CD14-positive monocyte (primary cell): ENCODE measurements at regions of chr20 and their contacts with region 1.

Region 1: DNA sequence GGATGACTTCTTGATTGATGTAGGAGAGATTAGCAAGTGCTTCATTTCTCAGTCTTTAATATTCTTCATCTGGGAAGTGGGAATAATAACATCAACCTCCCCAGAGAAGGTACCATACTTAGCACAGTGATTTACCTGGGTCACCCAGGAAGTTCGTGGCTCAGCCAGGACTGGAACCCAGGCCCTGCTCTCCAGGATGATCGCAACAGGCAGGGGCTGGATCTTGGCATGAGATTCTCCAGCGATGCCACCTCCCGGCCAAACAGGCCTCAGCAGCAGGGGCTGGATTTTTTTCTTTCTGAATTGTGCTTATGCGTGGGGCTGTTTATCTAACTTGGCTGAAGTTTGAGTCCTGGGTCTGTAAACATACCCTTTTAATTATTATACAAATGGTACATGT is 129.5 kb upstream of the PTPN1 start:
- DNase-seq: no peak
- H3K4me3 ChIP-seq: no peak overlapping the region
- H3K4me3 Mint-ChIP-seq: no peak overlapping the region
- H3K27ac ChIP-seq: no peak overlapping the region
- H3K27ac Mint-ChIP-seq: peak overlapping the region in 3 of 7 donors; percentile 38 to 87 (median 65)
- H3K4me1 ChIP-seq: peaks cover 57 to 69% of the 10 kb centered on the region in 2 donors
- H3K4me1 Mint-ChIP-seq: peaks cover 75% of the 10 kb centered on the region
- H3K27me3 ChIP-seq: no peaks in the 10 kb centered on the region
- H3K27me3 Mint-ChIP-seq: peaks cover 1 to 7% (median 5%) of the 10 kb centered on the region in 3 donors
- CTCF ChIP-seq: no peak

Region 2: DNA sequence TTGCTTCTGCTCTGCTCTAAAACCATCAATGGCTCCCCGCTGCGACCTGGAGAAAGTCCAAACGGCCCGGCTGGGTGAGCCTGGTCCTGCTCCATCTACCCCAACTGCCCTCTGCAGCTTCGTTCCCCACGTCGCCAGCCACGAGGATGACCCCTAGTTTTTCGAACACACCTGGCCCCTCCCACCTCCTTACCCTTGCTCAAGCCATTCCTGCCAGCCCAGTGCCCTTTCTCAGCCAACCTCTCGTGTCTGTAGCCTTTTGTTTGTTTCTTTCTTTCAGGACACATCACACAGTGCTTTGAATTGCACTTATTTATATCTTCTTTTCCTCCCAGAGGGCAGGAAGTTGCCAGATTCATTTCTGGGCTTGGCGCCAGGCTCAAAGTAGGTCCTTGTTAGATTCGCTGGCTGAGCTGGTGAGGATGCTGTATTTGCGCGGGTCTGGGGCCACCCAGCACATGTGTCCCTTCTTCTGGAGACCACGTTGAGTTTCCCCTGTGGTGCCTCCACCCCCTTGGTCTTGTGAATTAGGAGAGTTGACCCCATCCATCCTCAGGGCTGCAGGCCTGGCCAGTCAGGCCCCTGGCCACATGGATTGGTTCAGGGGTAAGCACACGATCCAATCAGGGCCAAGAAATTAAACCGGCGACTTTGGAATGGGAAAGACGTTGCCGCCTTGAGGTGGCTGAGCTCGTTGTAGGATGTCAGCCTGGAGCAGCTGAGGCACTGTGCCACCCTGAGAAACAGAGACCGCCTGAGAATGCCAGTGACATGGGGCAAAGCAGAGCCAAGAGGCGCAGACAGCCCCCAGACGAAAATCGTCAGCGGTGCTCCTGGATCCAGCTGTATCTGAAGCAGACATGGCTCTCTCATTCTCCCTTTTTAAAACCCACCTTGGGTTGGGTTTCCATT is 34.0 kb before region 1 on chr20:
- intact Hi-C with region 1: loop called in 1 of 2 experiments (anchors 2 kb)
- DNase-seq: peak; percentile 47 to 58 (median 51)
- H3K4me3 ChIP-seq: peak overlapping the region in 1 of 3 experiments; percentile 51
- H3K4me3 Mint-ChIP-seq: peak overlapping the region; percentile 67 to 84
- H3K27ac ChIP-seq: peak overlapping the region; percentile 84 to 94
- H3K27ac Mint-ChIP-seq: peak overlapping the region; percentile 97 to 99 (median 98)
- H3K4me1 ChIP-seq: peaks cover 76 to 82% of the 10 kb centered on the region in 2 donors
- H3K4me1 Mint-ChIP-seq: peaks cover 78% of the 10 kb centered on the region
- H3K27me3 ChIP-seq: no peaks in the 10 kb centered on the region
- H3K27me3 Mint-ChIP-seq: peaks cover 1 to 6% (median 4%) of the 10 kb centered on the region in 3 donors
- CTCF ChIP-seq: no peak

Region 3: DNA sequence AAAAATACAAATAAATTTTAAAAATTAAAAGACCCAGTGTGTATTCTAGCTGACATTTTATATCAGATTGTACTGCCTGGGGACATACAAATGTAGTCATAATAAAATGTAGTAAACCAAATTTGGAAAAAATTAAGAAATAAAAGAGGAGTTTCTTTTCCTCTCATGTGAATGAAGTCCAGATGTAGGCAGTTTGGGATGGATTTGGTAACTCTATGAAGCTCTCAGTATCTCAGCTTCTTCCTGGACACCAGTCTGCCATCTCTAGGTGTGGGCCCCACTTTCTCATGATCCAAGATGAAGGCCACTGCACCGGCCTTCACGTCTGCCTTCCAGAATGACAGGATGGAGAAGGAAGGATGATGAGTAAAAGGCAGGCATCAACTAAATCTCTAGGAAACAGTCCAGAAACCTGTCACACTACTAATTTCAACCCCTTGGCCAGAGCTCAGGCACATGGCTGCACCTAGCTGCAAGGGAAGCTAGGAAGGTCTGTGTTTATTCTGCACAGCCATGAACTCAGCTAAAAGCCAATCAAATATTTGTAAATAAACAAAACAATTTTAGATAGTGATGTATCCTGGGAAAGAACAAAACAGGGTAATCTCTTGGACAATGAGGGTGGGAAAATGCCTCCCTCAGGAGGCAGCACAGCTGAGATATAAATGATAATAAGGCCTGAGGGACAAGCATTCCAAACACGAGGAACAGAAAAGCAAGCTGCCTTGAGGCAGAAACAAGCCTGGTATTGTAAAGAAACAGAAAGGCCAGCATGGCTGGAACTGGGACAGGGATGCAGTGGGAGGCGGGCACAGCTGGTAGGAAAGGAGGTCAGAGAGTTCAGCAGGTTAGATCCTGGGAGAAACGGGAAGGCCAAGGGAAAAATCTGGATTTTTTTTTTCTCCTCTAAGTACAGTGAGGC is 41.0 kb after region 1 on chr20:
- intact Hi-C with region 1: loop called in 1 of 2 experiments (anchors 5 kb)
- DNase-seq: no peak
- H3K4me3 ChIP-seq: no peak overlapping the region
- H3K4me3 Mint-ChIP-seq: no peak overlapping the region
- H3K27ac ChIP-seq: no peak overlapping the region
- H3K27ac Mint-ChIP-seq: peak overlapping the region in 1 of 7 donors; percentile 40
- H3K4me1 ChIP-seq: peaks cover 0 to 3% of the 10 kb centered on the region in 2 donors
- H3K4me1 Mint-ChIP-seq: peaks cover 21% of the 10 kb centered on the region
- H3K27me3 ChIP-seq: no peaks in the 10 kb centered on the region
- H3K27me3 Mint-ChIP-seq: peaks cover 0 to 3% (median 1%) of the 10 kb centered on the region in 3 donors
- CTCF ChIP-seq: no peak

Region 4: GRCh38 chr20:50655311-50655880 is 274.8 kb after region 1 on chr20:
- intact Hi-C with region 1: no loop called
- DNase-seq: no peak
- H3K4me3 ChIP-seq: no peak overlapping the region
- H3K4me3 Mint-ChIP-seq: no peak overlapping the region
- H3K27ac ChIP-seq: no peak overlapping the region
- H3K27ac Mint-ChIP-seq: no peak overlapping the region
- H3K4me1 ChIP-seq: no peaks in the 10 kb centered on the region
- H3K4me1 Mint-ChIP-seq: no peaks in the 10 kb centered on the region
- H3K27me3 ChIP-seq: no peaks in the 10 kb centered on the region
- H3K27me3 Mint-ChIP-seq: peaks cover 0 to 5% (median 0%) of the 10 kb centered on the region in 3 donors
- CTCF ChIP-seq: no peak